ENCODE measurements at regions of chr13 and their contacts with region 1.

Region 1: DNA sequence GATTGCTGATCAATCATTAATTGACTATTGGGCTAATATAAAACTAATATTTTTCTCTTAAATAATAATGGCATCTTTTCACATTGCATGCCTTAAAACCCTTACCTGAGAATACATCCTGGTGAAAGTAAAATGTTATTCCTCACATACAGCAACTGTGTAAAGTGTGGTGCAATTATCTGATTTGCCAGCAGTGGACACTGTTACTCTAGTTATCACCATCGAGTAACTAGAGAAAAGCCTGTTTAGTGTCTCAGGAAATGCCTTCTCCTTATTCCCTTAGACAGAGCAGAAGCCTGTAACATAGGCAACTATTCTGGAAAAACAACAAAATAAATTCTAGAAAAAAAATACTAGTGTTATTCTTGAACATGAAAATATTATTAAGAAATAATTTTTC is 459.8 kb downstream of the FGF14 start:
- DNase-seq: no peak
- H3K4me3 ChIP-seq: no peak overlapping the region
- H3K27ac ChIP-seq: no peak overlapping the region
- H3K4me1 ChIP-seq: peaks cover 0 to 15% (median 0%) of the 10 kb centered on the region in 3 donors
- H3K27me3 ChIP-seq: no peaks in the 10 kb centered on the region
- CTCF ChIP-seq: peak; percentile 26 to 89 (median 63)
- POLR2A ChIP-seq: no peak

Region 2: GRCh38 chr13:101730420-101731000 is 211.5 kb before region 1 on chr13:
- intact Hi-C with region 1: no loop called
- DNase-seq: no peak
- H3K4me3 ChIP-seq: no peak overlapping the region
- H3K27ac ChIP-seq: no peak overlapping the region
- H3K4me1 ChIP-seq: no peaks in the 10 kb centered on the region
- H3K27me3 ChIP-seq: no peaks in the 10 kb centered on the region
- CTCF ChIP-seq: no peak
- POLR2A ChIP-seq: no peak

Region 3: DNA sequence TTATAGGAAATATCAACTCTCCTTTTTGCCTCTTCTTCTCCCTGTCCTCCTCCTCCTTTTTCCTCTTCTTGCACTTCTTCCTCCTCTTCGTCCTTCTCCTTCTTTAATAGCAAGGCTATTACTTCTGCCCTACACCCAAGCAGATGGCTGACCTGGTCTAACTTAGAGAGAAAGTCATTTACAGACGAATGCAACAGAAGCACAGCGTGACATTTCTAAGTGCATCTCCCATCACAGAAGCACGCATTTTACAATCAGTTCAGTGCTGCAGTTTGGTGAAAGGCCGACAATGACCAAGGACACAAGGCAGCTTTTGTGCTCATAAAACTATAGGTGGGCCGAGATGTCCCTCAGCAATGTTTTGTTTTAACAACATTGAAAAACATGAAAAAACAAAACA is 228.3 kb after region 1 on chr13:
- intact Hi-C with region 1: no loop called
- DNase-seq: no peak
- H3K4me3 ChIP-seq: no peak overlapping the region
- H3K27ac ChIP-seq: no peak overlapping the region
- H3K4me1 ChIP-seq: no peaks in the 10 kb centered on the region
- H3K27me3 ChIP-seq: no peaks in the 10 kb centered on the region
- CTCF ChIP-seq: no peak
- POLR2A ChIP-seq: no peak

Region 4: DNA sequence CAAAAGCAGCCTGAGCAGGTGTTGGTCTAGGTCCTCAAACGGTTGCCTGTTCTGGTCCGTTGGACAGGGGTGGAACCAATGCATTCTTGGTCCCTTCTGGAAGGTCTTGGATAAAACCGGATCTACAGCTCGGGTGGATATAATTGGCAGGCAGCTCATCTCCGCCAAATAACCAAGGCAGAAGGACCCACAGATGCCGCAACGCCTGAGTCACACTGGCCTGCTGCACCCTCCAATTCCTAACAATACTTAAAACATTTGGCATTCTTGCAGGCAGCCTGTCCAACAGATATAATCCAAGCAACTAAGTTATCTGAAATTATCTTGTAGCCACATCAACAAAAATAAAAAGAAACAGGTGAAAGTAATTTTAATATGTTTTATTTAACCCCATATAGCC is 518.8 kb after region 1 on chr13:
- intact Hi-C with region 1: loop called (anchors 5 kb)
- DNase-seq: no peak
- H3K4me3 ChIP-seq: no peak overlapping the region
- H3K27ac ChIP-seq: no peak overlapping the region
- H3K4me1 ChIP-seq: no peaks in the 10 kb centered on the region
- H3K27me3 ChIP-seq: no peaks in the 10 kb centered on the region
- CTCF ChIP-seq: no peak
- POLR2A ChIP-seq: no peak

Region 5: GRCh38 chr13:102555917-102556553 is 614.0 kb after region 1 on chr13:
- intact Hi-C with region 1: loop called (anchors 10 kb)
- DNase-seq: no peak
- H3K4me3 ChIP-seq: no peak overlapping the region
- H3K27ac ChIP-seq: no peak overlapping the region
- H3K4me1 ChIP-seq: no peaks in the 10 kb centered on the region
- H3K27me3 ChIP-seq: no peaks in the 10 kb centered on the region
- CTCF ChIP-seq: peak in 4 of 6 experiments; percentile 33 to 50 (median 34)
- POLR2A ChIP-seq: no peak

Measured in esophagus squamous epithelium (tissue), 5 donors.